T-cell (primary cell): ENCODE measurements at regions of chr1 and their contacts with region 1.

Region 1: GRCh38 chr1:88851303-88852063 is 39.9 kb downstream of the GTF2B start:
- DNase-seq: no peak
- ATAC-seq: no peak
- H3K4me3 ChIP-seq: no peak overlapping the region
- H3K4me3 Mint-ChIP-seq: no peak overlapping the region
- H3K27ac ChIP-seq: no peak overlapping the region
- H3K27ac Mint-ChIP-seq: peak overlapping the region in 1 of 2 donors; percentile 44
- H3K4me1 ChIP-seq: no peaks in the 10 kb centered on the region
- H3K4me1 Mint-ChIP-seq: no peaks in the 10 kb centered on the region
- H3K27me3 ChIP-seq: no peaks in the 10 kb centered on the region
- H3K27me3 Mint-ChIP-seq: no peaks in the 10 kb centered on the region

Region 2: GRCh38 chr1:86972262-86972661 is 1879.2 kb before region 1 on chr1:
- CTCF ChIA-PET with region 1: no interaction called
- POLR2A ChIA-PET with region 1: interaction called in 1 of 2 experiments, 15 read pairs
- DNase-seq: no peak
- ATAC-seq: no peak
- H3K4me3 ChIP-seq: no peak overlapping the region
- H3K4me3 Mint-ChIP-seq: no peak overlapping the region
- H3K27ac ChIP-seq: no peak overlapping the region
- H3K27ac Mint-ChIP-seq: no peak overlapping the region
- H3K4me1 ChIP-seq: no peaks in the 10 kb centered on the region
- H3K4me1 Mint-ChIP-seq: peaks cover 15 to 26% (median 21%) of the 10 kb centered on the region in 3 donors
- H3K27me3 ChIP-seq: peaks cover 0 to 2% of the 10 kb centered on the region in 2 experiments
- H3K27me3 Mint-ChIP-seq: no peaks in the 10 kb centered on the region

Region 3: DNA sequence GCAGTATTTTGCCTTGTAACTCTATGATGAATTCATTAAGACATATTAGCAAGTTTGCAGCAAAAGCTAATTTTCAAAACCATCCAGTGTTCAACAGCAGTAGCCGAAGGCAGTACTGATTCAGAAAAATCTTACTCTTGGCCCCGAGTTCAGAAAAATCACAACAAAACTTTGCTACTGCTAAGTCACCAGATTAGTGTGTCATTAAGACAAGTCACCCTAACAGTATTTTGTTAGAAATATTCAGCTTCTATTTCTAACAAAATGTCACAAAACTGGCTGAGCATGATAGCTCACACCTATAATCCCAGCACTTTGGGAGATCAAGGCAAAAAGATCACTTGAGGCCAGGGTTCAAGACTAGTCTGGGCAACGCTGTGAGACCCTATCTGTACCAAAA is 31.7 kb after region 1 on chr1:
- CTCF ChIA-PET with region 1: interaction called in 1 of 2 experiments, 11 read pairs
- POLR2A ChIA-PET with region 1: no interaction called
- DNase-seq: no peak
- ATAC-seq: no peak
- H3K4me3 ChIP-seq: no peak overlapping the region
- H3K4me3 Mint-ChIP-seq: peak overlapping the region in 1 of 3 donors; percentile 10
- H3K27ac ChIP-seq: no peak overlapping the region
- H3K27ac Mint-ChIP-seq: peak overlapping the region in 1 of 2 donors; percentile 50
- H3K4me1 ChIP-seq: peaks cover 2 to 12% of the 10 kb centered on the region in 2 experiments
- H3K4me1 Mint-ChIP-seq: peaks cover 56 to 66% (median 57%) of the 10 kb centered on the region in 3 donors
- H3K27me3 ChIP-seq: no peaks in the 10 kb centered on the region
- H3K27me3 Mint-ChIP-seq: no peaks in the 10 kb centered on the region

Region 4: DNA sequence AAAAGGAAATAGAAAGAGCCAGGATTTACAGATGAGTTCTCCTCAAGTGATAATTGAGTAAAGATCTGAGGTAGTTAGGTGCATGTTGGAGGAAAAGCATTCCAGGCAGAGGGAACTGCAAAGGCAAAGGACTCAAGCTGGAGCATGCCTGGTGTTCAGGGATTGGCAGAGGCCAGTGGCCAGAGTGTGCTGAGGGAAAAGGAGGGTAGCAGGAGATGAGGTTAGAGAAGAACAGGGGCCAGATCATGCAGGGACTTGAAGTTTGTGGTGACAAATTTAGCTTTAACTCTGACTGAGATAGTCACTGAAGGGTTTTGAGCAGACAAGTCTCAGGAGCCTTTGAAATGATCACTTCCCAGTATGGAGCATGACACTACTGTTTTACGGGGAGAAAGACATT is 58.9 kb after region 1 on chr1:
- CTCF ChIA-PET with region 1: no interaction called
- POLR2A ChIA-PET with region 1: no interaction called
- DNase-seq: no peak
- ATAC-seq: no peak
- H3K4me3 ChIP-seq: no peak overlapping the region
- H3K4me3 Mint-ChIP-seq: no peak overlapping the region
- H3K27ac ChIP-seq: no peak overlapping the region
- H3K27ac Mint-ChIP-seq: no peak overlapping the region
- H3K4me1 ChIP-seq: no peaks in the 10 kb centered on the region
- H3K4me1 Mint-ChIP-seq: peaks cover 0 to 8% (median 7%) of the 10 kb centered on the region in 3 donors
- H3K27me3 ChIP-seq: no peaks in the 10 kb centered on the region
- H3K27me3 Mint-ChIP-seq: no peaks in the 10 kb centered on the region